ENCODE measurements at regions of chr18 and their contacts with region 1.

Region 1: DNA sequence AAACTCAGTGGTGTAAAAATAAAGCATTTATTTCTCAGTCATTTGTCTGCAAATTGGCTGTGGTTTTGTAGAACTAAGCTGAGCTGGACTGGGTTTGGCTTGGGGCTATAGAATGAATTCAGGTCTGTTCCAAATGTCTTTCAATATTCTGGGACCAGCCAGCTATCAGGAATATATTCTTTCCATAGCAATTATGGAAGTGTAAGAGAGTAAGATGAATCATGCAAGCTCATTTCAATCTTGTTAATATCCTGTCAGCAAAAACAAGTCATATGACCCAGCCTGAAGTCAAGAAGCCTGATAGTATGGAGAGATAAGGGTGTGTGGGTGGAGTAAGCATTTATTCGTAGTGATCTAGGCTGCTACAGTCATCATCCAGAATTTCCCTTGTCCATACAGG is 481.0 kb upstream of the CDH2 start:
- DNase-seq: no peak
- H3K4me3 ChIP-seq: no peak overlapping the region
- H3K27ac ChIP-seq: no peak overlapping the region
- H3K4me1 ChIP-seq: no peaks in the 10 kb centered on the region
- H3K27me3 ChIP-seq: no peaks in the 10 kb centered on the region
- CTCF ChIP-seq: no peak

Region 2: DNA sequence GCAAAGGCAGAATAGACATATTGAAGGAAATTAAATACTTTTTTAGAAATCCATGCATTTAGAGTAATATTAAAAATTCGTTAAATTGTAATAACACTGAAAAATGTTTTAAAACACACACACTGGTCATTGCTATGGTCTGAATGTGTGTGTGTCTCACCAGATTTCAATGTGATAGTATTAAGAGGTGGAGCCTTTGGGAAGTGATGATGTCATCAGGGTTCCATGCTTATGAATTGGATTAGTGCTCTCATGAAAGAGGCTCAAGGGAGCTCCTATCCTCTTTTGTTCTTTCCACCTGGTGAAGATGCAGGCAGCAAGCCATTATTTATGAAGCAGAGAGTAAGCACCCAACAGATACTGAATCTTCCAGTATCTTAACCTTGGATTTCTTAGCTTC is 922.9 kb before region 1 on chr18:
- CTCF ChIA-PET with region 1: no interaction called
- POLR2A ChIA-PET with region 1: interaction called, 13 read pairs
- intact Hi-C with region 1: no loop called
- DNase-seq: no peak
- H3K4me3 ChIP-seq: no peak overlapping the region
- H3K27ac ChIP-seq: no peak overlapping the region
- H3K4me1 ChIP-seq: no peaks in the 10 kb centered on the region
- H3K27me3 ChIP-seq: no peaks in the 10 kb centered on the region
- CTCF ChIP-seq: no peak

Measured in PC-9 (cell line).